Activated T-helper 2 cell treated with anti-CD3 and anti-CD28 coated beads, Interferon-gamma antibody, Interleukin-2, Interleukin-4, amounts not matched to agents 10 μg/mL and 5 μg/mL and 100 μg/mL, durations not matched to agents 14 hours and 24 hours and 36 hours (primary cell): ENCODE measurements at regions of chr4 and their contacts with region 1.

Region 1: GRCh38 chr4:82201805-82202641 is 171.8 kb downstream of the HNRNPD start:
- DNase-seq: no peak
- H3K4me3 Mint-ChIP-seq: no peak overlapping the region
- H3K27ac Mint-ChIP-seq: no peak overlapping the region
- H3K4me1 Mint-ChIP-seq: peaks cover 3% of the 10 kb centered on the region
- H3K27me3 Mint-ChIP-seq: peaks cover 25% of the 10 kb centered on the region

Region 2: GRCh38 chr4:81913427-81913879 is 288.6 kb before region 1 on chr4:
- intact Hi-C with region 1: loop called (anchors 10 kb)
- DNase-seq: peak; percentile 17
- H3K4me3 Mint-ChIP-seq: no peak overlapping the region
- H3K27ac Mint-ChIP-seq: no peak overlapping the region
- H3K4me1 Mint-ChIP-seq: peaks cover 4% of the 10 kb centered on the region
- H3K27me3 Mint-ChIP-seq: peaks cover 25% of the 10 kb centered on the region

Region 3: GRCh38 chr4:82136161-82136801 is 65.7 kb before region 1 on chr4:
- intact Hi-C with region 1: no loop called
- DNase-seq: no peak
- H3K4me3 Mint-ChIP-seq: no peak overlapping the region
- H3K27ac Mint-ChIP-seq: no peak overlapping the region
- H3K4me1 Mint-ChIP-seq: peaks cover 13% of the 10 kb centered on the region
- H3K27me3 Mint-ChIP-seq: no peaks in the 10 kb centered on the region

Region 4: DNA sequence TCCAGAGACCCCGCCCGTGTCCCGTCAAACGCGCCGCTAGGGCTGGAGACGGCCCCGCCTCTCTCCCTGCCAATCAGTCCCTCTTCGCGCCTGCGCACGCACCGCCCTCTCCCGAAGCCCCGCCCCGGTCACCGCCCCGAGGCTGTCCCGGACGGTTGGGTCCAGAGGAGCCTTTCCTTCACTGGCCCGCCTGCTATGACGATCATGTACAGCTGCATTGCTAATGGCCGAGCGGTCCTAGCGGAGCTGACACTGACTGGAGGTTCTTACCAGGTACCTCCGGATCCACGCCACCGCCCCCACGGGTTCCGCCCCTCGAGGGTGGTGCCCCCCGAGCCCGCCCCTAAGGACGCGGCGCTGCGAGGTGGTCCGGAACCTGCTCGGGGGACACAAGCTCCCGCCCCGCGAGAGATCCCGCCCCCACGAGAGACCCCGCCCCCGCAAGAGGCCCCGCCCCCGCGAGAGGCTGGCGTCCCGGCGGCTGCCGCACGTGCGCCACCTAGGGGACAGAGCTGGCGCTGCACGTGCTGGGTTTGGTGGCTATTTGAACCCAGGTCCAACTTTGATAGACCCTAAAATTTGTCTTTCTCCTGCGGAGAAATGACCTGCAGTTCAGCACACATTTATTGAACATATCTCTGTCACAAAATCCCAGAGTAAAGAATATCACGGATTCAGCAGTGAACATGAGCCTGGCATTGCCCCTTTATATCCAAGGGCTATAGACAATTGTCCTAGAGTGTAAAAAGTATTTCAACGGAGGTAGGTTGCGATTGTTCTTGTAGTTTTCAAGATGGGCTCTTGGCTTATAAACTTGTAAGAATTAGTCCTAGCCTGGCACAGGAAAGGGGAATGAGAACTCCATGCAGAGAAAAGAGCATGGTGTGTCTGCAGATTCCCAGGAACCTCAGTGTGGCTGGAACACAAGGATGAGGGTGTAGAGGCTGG is 83.1 kb after region 1 on chr4:
- intact Hi-C with region 1: no loop called
- DNase-seq: peak; percentile 99
- H3K4me3 Mint-ChIP-seq: peak overlapping the region; percentile 76
- H3K27ac Mint-ChIP-seq: no peak overlapping the region
- H3K4me1 Mint-ChIP-seq: peaks cover 12% of the 10 kb centered on the region
- H3K27me3 Mint-ChIP-seq: peaks cover 26% of the 10 kb centered on the region